ENCODE measurements at regions of chr3 and their contacts with region 1.

Region 1: DNA sequence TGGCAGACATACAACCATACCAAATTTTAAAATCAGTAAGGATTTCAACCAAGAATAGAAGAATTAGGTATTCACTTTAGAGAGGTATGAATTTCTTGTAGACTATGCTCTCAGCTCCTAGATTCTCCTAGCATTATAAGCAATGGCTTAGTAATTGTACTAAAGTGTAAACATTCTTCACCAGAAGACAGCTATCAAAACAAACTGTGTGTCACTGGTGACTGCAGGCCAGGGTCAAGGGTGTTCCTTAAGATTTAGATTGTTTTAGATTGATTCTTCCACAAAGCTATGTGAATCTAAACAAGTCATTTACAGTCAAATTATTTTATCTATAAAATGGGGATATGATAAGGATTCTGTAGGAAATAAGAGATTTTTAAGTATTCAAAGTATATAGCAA is 23.1 kb upstream of the GP5 start:
- DNase-seq: no peak
- ATAC-seq: no peak
- H3K4me3 Mint-ChIP-seq: no peak overlapping the region
- H3K27ac Mint-ChIP-seq: no peak overlapping the region
- H3K4me1 Mint-ChIP-seq: no peaks in the 10 kb centered on the region
- H3K27me3 Mint-ChIP-seq: no peaks in the 10 kb centered on the region
- CTCF ChIP-seq: no peak

Region 2: DNA sequence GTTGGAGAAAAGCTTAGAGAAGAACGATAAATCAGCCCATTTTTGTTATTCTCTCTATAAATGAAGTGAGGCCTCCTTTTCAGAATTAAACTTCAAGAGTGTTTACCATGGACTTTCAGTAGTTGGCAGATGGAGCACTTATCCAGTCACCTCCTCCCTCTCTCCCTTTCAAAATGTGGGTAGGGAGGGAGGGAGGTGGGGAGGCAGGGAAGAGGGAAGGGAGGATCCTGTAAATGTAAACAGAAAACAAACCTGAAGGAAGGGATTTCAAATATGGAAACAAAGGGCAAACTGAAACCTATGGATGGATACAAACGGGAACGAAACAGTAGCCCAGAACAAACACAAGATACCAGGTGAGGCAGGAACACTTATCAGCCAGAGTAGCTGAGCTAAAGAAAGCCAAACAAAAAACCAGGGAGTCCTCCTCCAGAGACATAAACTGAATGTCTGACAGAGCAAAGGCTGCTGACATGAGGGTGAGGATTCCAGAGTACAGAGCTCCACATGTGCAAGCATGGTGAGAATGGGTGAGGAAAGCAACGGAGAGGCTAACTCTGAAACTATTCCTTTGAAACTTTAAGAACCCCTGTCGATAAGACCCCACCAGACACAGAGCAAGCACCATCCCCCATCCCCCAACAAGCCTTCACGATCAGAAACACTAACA is 17.8 kb after region 1 on chr3:
- CTCF ChIA-PET with region 1: no interaction called
- POLR2A ChIA-PET with region 1: no interaction called
- intact Hi-C with region 1: no loop called
- DNase-seq: no peak
- ATAC-seq: no peak
- H3K4me3 Mint-ChIP-seq: no peak overlapping the region
- H3K27ac Mint-ChIP-seq: no peak overlapping the region
- H3K4me1 Mint-ChIP-seq: no peaks in the 10 kb centered on the region
- H3K27me3 Mint-ChIP-seq: no peaks in the 10 kb centered on the region
- CTCF ChIP-seq: no peak

Region 3: DNA sequence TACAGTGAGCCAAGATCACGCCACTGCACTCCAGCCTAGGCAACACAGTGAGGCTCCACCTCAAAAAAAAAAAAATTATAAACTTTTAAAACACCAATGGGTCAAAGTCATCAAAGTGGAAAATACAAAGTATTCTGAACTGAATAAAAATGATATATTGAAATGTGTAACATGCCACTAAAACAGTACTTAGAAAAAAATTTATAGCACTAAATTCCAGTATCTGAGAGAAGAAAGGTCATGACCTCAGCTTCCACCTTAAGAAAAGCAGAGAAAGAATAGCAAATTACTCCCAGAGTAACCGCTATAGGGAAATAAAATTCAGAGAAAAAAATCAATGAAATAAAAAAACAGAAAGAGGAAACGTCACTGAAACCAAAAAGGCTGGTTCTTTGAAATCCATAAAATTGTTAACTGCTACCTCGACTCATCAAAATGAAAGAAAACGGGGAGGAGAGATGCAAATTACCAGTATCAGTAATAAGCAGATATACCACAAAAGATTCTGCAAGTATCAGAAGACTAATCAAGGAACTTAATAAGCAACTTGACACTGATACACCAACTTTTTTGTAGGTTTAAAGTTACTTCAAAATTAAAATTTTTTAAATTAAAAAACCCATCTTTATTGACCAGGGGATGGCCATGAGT is 43.9 kb after region 1 on chr3:
- CTCF ChIA-PET with region 1: no interaction called
- POLR2A ChIA-PET with region 1: no interaction called
- intact Hi-C with region 1: loop called (anchors 5 kb)
- DNase-seq: no peak
- ATAC-seq: no peak
- H3K4me3 Mint-ChIP-seq: no peak overlapping the region
- H3K27ac Mint-ChIP-seq: no peak overlapping the region
- H3K4me1 Mint-ChIP-seq: peaks cover 15% of the 10 kb centered on the region
- H3K27me3 Mint-ChIP-seq: no peaks in the 10 kb centered on the region
- CTCF ChIP-seq: no peak

Measured in activated B cell treated with CpG ODN at 0.5 μM for 24 hours (primary cell).